H1 (cell line): ENCODE measurements at regions of chr15 and their contacts with region 1.

Region 1: DNA sequence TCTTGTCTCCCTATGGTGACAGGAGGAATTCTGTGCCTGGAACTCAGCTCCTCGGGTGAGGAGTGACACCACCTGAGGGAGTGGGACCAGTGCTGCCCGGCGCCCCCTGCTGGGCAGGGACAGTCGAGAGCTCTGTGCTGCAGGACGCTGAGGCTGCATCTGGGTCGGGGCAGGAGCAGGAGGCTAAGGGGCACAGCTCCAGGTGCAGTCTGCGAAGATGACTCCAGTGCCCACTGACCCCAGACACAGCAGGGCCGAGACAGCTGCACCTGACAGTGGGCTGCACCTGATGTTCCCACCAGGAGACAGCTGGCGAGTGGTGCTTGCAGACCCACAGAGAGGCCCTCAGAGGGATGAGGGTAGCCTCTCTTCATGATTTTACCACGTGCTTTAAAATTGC is 152.9 kb downstream of the ATP10A start:
- DNase-seq: peak; percentile 34 to 89
- H3K4me3 ChIP-seq: no peak overlapping the region
- H3K27ac ChIP-seq: no peak overlapping the region
- H3K4me1 ChIP-seq: peaks cover 0 to 2% (median 0%) of the 10 kb centered on the region in 4 experiments; a peak in 1 of 7 replicates
- H3K27me3 ChIP-seq: no peaks in the 10 kb centered on the region
- CTCF ChIP-seq: peak; percentile 76 to 97 (median 89)
- EP300 ChIP-seq: no peak
- POLR2A ChIP-seq: no peak
- RAD21 ChIP-seq: peak; percentile 62 to 69

Region 2: DNA sequence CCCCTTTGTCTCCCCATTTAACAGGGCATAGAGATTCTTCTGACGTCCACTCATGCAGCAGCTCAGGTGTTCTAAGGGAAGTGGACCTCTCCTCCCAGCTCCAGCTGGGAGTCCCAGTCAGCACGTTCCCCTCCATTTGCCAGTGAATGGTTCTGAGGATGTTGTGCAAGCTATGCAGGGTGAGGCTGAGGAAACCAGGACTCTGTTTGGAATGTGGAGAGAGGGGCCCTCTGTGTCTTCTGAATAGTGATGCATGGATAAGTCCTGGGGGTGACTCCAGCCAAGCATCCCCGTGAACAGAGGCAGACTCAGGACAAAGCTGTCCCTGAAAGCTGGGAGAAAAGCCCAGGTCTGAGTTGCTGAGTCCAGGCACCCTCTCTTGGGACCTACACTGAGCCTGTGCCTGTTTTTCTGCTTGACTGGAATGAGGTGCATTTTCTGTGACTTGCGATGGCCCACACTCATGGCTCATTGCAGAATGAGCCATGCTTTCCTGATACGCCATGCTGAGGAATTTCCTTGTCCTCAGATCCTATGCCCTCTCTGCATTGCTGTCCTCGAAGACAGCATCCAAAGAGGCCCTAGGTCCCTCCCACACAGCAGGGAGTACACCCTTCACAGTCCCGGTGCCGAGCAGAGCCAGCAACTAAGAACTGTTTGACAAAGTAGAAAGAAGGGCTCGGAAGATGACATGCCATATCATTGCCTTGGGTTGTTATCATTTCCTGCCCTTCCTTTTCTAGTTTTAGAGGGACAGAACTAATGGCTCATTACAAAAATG is 32.3 kb before region 1 on chr15:
- CTCF ChIA-PET with region 1: no interaction called
- POLR2A ChIA-PET with region 1: no interaction called
- DNase-seq: no peak
- H3K4me3 ChIP-seq: no peak overlapping the region
- H3K27ac ChIP-seq: no peak overlapping the region
- H3K4me1 ChIP-seq: peaks cover 0 to 7% (median 3%) of the 10 kb centered on the region in 4 experiments; a peak in 3 of 7 replicates
- H3K27me3 ChIP-seq: no peaks in the 10 kb centered on the region
- CTCF ChIP-seq: no peak
- EP300 ChIP-seq: no peak
- POLR2A ChIP-seq: no peak
- RAD21 ChIP-seq: no peak

Region 3: DNA sequence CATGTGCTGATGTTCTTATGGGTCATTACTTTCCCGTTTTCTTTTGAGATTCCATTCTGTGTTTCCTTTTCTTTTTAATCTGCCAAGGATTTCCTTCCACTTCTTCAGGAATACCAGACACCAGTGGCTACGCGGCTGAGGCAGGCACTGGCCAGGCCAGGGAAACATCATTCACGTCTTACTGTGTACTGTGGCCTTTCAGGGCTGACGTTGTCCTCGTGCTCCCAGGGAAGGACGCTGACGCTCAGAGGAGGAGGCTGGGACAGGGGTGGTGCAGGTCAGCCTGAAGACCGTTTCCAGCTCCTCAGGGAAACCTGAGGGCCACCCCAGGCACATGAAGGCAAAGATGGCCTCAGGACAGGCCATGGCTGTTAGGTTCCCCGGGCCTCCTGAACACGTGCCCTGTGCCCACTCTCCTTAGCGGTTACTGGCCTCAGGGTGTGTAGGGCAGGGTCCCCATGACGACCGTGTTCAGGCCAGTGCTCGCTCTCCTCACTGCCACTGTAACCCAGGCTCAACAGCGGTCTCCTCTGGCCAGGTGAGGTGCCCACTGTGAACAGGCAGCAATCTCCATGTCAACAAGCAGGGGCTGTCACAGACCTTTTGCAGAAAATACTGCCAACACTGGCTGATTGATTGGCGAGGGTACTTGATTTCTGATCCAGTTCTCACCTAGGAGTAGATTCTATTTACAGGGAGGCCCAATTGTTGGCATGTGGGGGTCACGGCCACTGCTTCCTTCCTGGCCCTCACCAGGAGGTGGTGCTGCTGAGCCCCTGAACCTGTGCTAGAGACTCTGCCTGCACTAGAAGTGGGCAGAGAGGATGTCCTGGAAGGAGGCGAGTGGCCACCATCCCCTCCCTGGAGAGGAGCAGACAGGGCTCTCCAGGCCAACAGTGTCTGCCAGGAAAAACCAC is 16.6 kb before region 1 on chr15:
- CTCF ChIA-PET with region 1: interaction called, 16 read pairs
- POLR2A ChIA-PET with region 1: no interaction called
- DNase-seq: peak in 1 of 2 experiments; percentile 86
- H3K4me3 ChIP-seq: no peak overlapping the region
- H3K27ac ChIP-seq: no peak overlapping the region
- H3K4me1 ChIP-seq: peaks cover 0 to 14% (median 5%) of the 10 kb centered on the region in 4 experiments; a peak in 6 of 7 replicates
- H3K27me3 ChIP-seq: no peaks in the 10 kb centered on the region
- CTCF ChIP-seq: peak; percentile 70 to 92 (median 85)
- EP300 ChIP-seq: no peak
- POLR2A ChIP-seq: no peak
- RAD21 ChIP-seq: peak; percentile 66 to 68

Region 4: DNA sequence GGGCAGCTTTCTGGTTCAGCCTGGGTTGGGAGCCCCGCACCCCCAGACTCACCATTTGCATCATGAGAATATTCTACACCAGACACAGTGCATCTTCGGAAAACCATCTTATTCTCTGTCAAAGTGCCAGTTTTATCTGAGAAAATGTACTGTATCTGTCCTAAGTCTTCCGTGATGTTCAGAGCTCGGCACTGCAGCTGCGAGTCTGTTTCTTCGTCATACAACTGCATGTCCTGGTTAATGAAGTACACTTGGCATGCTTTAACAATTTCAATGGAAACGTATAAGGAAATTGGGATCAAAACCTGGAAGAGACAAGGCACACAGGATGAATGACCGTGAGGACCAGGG is 11.4 kb after region 1 on chr15:
- CTCF ChIA-PET with region 1: interaction called, 13 read pairs
- POLR2A ChIA-PET with region 1: no interaction called
- DNase-seq: no peak
- H3K4me3 ChIP-seq: no peak overlapping the region
- H3K27ac ChIP-seq: no peak overlapping the region
- H3K4me1 ChIP-seq: peaks cover 0 to 2% (median 0%) of the 10 kb centered on the region in 4 experiments; a peak in 1 of 7 replicates
- H3K27me3 ChIP-seq: no peaks in the 10 kb centered on the region; a peak in 1 of 7 replicates
- CTCF ChIP-seq: no peak
- EP300 ChIP-seq: no peak
- POLR2A ChIP-seq: no peak
- RAD21 ChIP-seq: no peak